Calu3 (cell line): ENCODE measurements at regions of chr15 and their contacts with region 1.

Region 1: GRCh38 chr15:53586799-53587198 is 172.7 kb downstream of the WDR72 start:
- DNase-seq: peak; percentile 59
- H3K4me3 Mint-ChIP-seq: no peak overlapping the region
- H3K27ac Mint-ChIP-seq: no peak overlapping the region
- H3K4me1 Mint-ChIP-seq: peaks cover 19% of the 10 kb centered on the region
- H3K27me3 Mint-ChIP-seq: no peaks in the 10 kb centered on the region
- CTCF ChIP-seq: peak; percentile 40

Region 2: GRCh38 chr15:53522991-53523390 is 63.8 kb before region 1 on chr15:
- CTCF ChIA-PET with region 1: no interaction called
- intact Hi-C with region 1: loop called (anchors 5 kb)
- DNase-seq: no peak
- H3K4me3 Mint-ChIP-seq: no peak overlapping the region
- H3K27ac Mint-ChIP-seq: no peak overlapping the region
- H3K4me1 Mint-ChIP-seq: peaks cover 9% of the 10 kb centered on the region
- H3K27me3 Mint-ChIP-seq: no peaks in the 10 kb centered on the region
- CTCF ChIP-seq: no peak

Region 3: GRCh38 chr15:53611145-53611920 is 24.5 kb after region 1 on chr15:
- CTCF ChIA-PET with region 1: no interaction called
- intact Hi-C with region 1: no loop called
- DNase-seq: peak; percentile 2
- H3K4me3 Mint-ChIP-seq: no peak overlapping the region
- H3K27ac Mint-ChIP-seq: no peak overlapping the region
- H3K4me1 Mint-ChIP-seq: no peaks in the 10 kb centered on the region
- H3K27me3 Mint-ChIP-seq: no peaks in the 10 kb centered on the region
- CTCF ChIP-seq: no peak